Naive thymus-derived CD4-positive, alpha-beta T cell (primary cell): ENCODE measurements at regions of chr19 and their contacts with region 1.

Region 1: GRCh38 chr19:42132851-42133528 is 744 bp upstream of the POU2F2 start:
- DNase-seq: peak; percentile 69 to 97 (median 85)
- ATAC-seq: peak; percentile 87
- H3K4me3 ChIP-seq: peak overlapping the region; percentile 81
- H3K4me3 Mint-ChIP-seq: peak overlapping the region; percentile 81 to 95 (median 92)
- H3K27ac ChIP-seq: peak overlapping the region; percentile 80
- H3K27ac Mint-ChIP-seq: peak overlapping the region; percentile 69 to 94 (median 87)
- H3K4me1 ChIP-seq: peaks cover 23 to 33% of the 10 kb centered on the region in 2 donors
- H3K4me1 Mint-ChIP-seq: peaks cover 54 to 79% (median 65%) of the 10 kb centered on the region in 7 donors
- H3K27me3 ChIP-seq: no peaks in the 10 kb centered on the region
- H3K27me3 Mint-ChIP-seq: no peaks in the 10 kb centered on the region

Region 2: GRCh38 chr19:41934849-41935374 is 198.1 kb before region 1 on chr19:
- CTCF ChIA-PET with region 1: no interaction called
- POLR2A ChIA-PET with region 1: no interaction called
- intact Hi-C with region 1: no loop called
- DNase-seq: peak; percentile 47 to 78 (median 67)
- ATAC-seq: peak; percentile 83
- H3K4me3 ChIP-seq: no peak overlapping the region
- H3K4me3 Mint-ChIP-seq: peak overlapping the region in 4 of 10 donors; percentile 30 to 66 (median 33)
- H3K27ac ChIP-seq: peak overlapping the region; percentile 40
- H3K27ac Mint-ChIP-seq: peak overlapping the region; percentile 46 to 88 (median 81)
- H3K4me1 ChIP-seq: peaks cover 26 to 29% of the 10 kb centered on the region in 2 donors
- H3K4me1 Mint-ChIP-seq: peaks cover 37 to 63% (median 48%) of the 10 kb centered on the region in 7 donors
- H3K27me3 ChIP-seq: peaks cover 0 to 4% of the 10 kb centered on the region in 2 donors
- H3K27me3 Mint-ChIP-seq: peaks cover 0 to 24% (median 0%) of the 10 kb centered on the region in 5 donors

Region 3: GRCh38 chr19:42075616-42076379 is 57.2 kb before region 1 on chr19 and contains the start of gene ZNF574:
- CTCF ChIA-PET with region 1: interaction called, 3 read pairs
- POLR2A ChIA-PET with region 1: interaction called, 3 read pairs
- intact Hi-C with region 1: loop called (anchors 1 to 2 kb)
- DNase-seq: peak; percentile 91 to 99 (median 98)
- ATAC-seq: peak; percentile 98
- H3K4me3 ChIP-seq: peak within 1 kb of the TSS; percentile 70
- H3K4me3 Mint-ChIP-seq: peak within 1 kb of the TSS; percentile 92 to 100 (median 98)
- H3K27ac ChIP-seq: peak within 1 kb of the TSS; percentile 97
- H3K27ac Mint-ChIP-seq: peak within 1 kb of the TSS; percentile 99 to 100 (median 100)
- H3K4me1 ChIP-seq: peaks cover 19 to 24% of the 10 kb centered on the region in 2 donors
- H3K4me1 Mint-ChIP-seq: peaks cover 26 to 44% (median 38%) of the 10 kb centered on the region in 7 donors
- H3K27me3 ChIP-seq: no peaks in the 10 kb centered on the region
- H3K27me3 Mint-ChIP-seq: peaks cover 0 to 13% (median 0%) of the 10 kb centered on the region in 5 donors
- total RNA-seq, gene ZNF574: 17.6 to 26.7 (median 20.9) TPM

Region 4: GRCh38 chr19:42158926-42159325 is 25.9 kb after region 1 on chr19:
- CTCF ChIA-PET with region 1: no interaction called
- POLR2A ChIA-PET with region 1: no interaction called
- intact Hi-C with region 1: no loop called
- DNase-seq: no peak
- ATAC-seq: no peak
- H3K4me3 ChIP-seq: no peak overlapping the region
- H3K4me3 Mint-ChIP-seq: no peak overlapping the region
- H3K27ac ChIP-seq: no peak overlapping the region
- H3K27ac Mint-ChIP-seq: peak overlapping the region in 1 of 9 donors; percentile 77
- H3K4me1 ChIP-seq: peaks cover 3 to 16% of the 10 kb centered on the region in 2 donors
- H3K4me1 Mint-ChIP-seq: peaks cover 13 to 25% (median 21%) of the 10 kb centered on the region in 7 donors
- H3K27me3 ChIP-seq: no peaks in the 10 kb centered on the region
- H3K27me3 Mint-ChIP-seq: peaks cover 0 to 27% (median 0%) of the 10 kb centered on the region in 5 donors

Region 5: GRCh38 chr19:42176990-42177685 is 44.1 kb after region 1 on chr19:
- CTCF ChIA-PET with region 1: interaction called, 6 read pairs
- POLR2A ChIA-PET with region 1: interaction called, 4 read pairs
- intact Hi-C with region 1: loop called (anchors 1 to 2 kb)
- DNase-seq: peak; percentile 52 to 82 (median 67)
- ATAC-seq: peak; percentile 96
- H3K4me3 ChIP-seq: peak overlapping the region; percentile 41
- H3K4me3 Mint-ChIP-seq: peak overlapping the region in 1 of 10 donors; percentile 12
- H3K27ac ChIP-seq: no peak overlapping the region
- H3K27ac Mint-ChIP-seq: no peak overlapping the region
- H3K4me1 ChIP-seq: peaks cover 12 to 21% of the 10 kb centered on the region in 2 donors
- H3K4me1 Mint-ChIP-seq: peaks cover 16 to 24% (median 19%) of the 10 kb centered on the region in 7 donors
- H3K27me3 ChIP-seq: peaks cover 0 to 11% of the 10 kb centered on the region in 2 donors
- H3K27me3 Mint-ChIP-seq: peaks cover 13 to 34% (median 19%) of the 10 kb centered on the region in 5 donors

Region 6: DNA sequence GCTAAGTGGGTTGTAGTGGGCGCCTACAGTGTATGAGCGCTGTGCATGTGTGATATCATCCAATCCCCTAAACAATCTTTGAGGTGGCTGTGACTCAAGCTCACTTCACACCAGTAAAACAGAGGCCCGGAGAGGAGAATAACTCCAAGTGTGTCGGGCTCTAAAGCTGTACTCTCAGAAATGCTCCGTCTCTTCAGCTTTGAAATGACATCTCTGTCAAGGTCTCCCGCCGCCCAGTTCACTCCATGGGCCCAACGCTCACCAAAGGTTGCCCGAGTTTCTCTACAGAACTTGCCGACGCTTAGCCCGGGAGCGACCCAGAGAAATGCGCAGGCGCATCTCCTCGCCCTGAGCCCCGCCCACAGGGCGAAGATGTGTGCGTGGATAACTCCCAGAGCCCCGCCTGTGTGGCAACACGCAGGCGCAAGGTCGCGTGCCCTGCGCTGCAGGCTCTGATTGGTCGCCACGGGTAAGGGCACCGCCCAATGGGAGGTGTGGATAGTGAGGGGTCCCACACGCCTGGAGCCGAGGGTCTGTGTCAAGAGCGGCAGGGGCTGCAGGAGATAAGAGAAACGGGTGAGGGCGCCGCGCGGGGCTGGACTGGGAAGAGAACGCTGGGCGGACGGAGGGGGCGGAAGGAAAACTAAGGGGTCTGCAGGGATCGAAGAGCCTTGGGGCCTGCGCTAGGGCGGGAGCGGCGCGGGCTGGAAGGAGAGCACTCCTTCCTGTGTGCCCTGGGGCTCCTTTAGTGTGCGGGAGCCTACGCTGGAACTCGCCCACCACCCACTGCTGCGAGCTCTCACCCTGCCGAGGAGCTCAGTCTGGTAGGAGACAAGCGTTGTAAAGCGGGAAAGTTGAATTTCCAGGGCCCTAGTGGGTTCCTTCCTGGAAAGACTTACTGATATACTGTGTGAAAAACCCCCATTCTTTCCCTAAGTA is 87.1 kb after region 1 on chr19 and contains the start of gene ZNF526:
- CTCF ChIA-PET with region 1: interaction called, 4 read pairs
- POLR2A ChIA-PET with region 1: no interaction called
- intact Hi-C with region 1: loop called (anchors 1 kb)
- DNase-seq: peak; percentile 92 to 97 (median 96)
- ATAC-seq: peak; percentile 88
- H3K4me3 ChIP-seq: peak within 1 kb of the TSS; percentile 72
- H3K4me3 Mint-ChIP-seq: peak within 1 kb of the TSS; percentile 95 to 99 (median 98)
- H3K27ac ChIP-seq: peak within 1 kb of the TSS; percentile 88
- H3K27ac Mint-ChIP-seq: peak within 1 kb of the TSS; percentile 88 to 98 (median 95)
- H3K4me1 ChIP-seq: peaks cover 37 to 43% of the 10 kb centered on the region in 2 donors
- H3K4me1 Mint-ChIP-seq: peaks cover 46 to 62% (median 55%) of the 10 kb centered on the region in 7 donors
- H3K27me3 ChIP-seq: no peaks in the 10 kb centered on the region
- H3K27me3 Mint-ChIP-seq: peaks cover 0 to 3% (median 0%) of the 10 kb centered on the region in 5 donors
- total RNA-seq, gene ZNF526: 8.6 to 25.2 (median 22.7) TPM

Region 7: DNA sequence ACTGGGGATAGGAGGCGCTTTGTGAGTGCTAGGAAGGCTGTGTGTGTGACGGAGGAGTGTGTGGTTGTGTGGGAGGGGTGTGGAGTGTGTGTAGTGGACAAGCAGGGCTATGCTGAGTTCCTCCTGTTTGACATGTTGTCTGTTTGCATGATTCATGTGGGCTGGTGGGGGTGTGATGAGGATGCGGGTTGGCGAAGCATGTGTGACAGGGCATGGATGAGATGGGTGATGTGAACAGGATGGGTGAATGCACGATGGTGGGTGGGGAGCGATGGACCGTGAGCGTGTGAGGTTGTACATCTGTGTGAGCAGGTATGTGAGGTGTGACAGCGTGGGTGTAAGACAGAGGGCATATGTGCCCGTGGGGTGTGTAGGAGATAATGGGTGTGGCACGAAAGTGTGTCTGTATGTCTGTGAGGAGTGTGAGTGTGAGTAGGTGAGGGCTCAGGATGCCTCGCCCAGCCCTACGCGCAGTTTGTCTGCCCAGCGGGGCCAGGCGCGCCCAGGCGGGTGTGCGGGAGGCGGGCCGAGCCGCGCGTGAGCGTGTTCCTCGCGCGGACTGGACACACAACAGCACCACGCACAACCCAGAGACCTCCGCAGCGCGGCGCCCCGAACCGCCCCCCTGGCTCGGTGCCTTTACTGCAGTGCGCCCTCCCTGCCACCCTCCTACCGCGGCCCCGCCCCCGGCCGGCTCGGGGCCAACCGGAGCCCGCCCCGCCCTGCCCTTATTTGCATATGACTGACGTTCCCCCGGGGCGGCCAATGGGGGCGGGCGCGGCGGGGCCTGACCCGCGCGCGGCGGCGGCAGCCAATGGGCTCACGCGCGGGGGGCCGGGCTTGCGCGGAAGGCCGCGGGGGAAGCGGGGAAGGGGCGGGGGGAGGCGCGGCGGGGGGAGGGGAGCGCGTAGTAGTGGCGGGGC is 150.4 kb after region 1 on chr19:
- CTCF ChIA-PET with region 1: interaction called, 14 read pairs
- POLR2A ChIA-PET with region 1: interaction called, 4 read pairs
- intact Hi-C with region 1: loop called (anchors 1 kb)
- DNase-seq: peak; percentile 93 to 97 (median 95)
- ATAC-seq: peak; percentile 83
- H3K4me3 ChIP-seq: peak overlapping the region; percentile 50
- H3K4me3 Mint-ChIP-seq: peak overlapping the region in 1 of 10 donors; percentile 0
- H3K27ac ChIP-seq: peak overlapping the region; percentile 83
- H3K27ac Mint-ChIP-seq: no peak overlapping the region
- H3K4me1 ChIP-seq: peaks cover 42 to 45% of the 10 kb centered on the region in 2 donors
- H3K4me1 Mint-ChIP-seq: peaks cover 22 to 44% (median 32%) of the 10 kb centered on the region in 7 donors
- H3K27me3 ChIP-seq: no peaks in the 10 kb centered on the region
- H3K27me3 Mint-ChIP-seq: no peaks in the 10 kb centered on the region

Region 8: GRCh38 chr19:42325273-42325895 is 192.4 kb after region 1 on chr19 and contains the start of gene MEGF8:
- CTCF ChIA-PET with region 1: interaction called, 3 read pairs
- POLR2A ChIA-PET with region 1: no interaction called
- intact Hi-C with region 1: loop called (anchors 1 kb)
- DNase-seq: peak; percentile 86 to 99 (median 97)
- ATAC-seq: peak; percentile 96
- H3K4me3 ChIP-seq: peak within 1 kb of the TSS; percentile 95
- H3K4me3 Mint-ChIP-seq: peak within 1 kb of the TSS; percentile 89 to 96 (median 94)
- H3K27ac ChIP-seq: peak within 1 kb of the TSS; percentile 84
- H3K27ac Mint-ChIP-seq: peak within 1 kb of the TSS; percentile 51 to 93 (median 83)
- H3K4me1 ChIP-seq: peaks cover 6 to 7% of the 10 kb centered on the region in 2 donors
- H3K4me1 Mint-ChIP-seq: peaks cover 13 to 29% (median 22%) of the 10 kb centered on the region in 7 donors
- H3K27me3 ChIP-seq: peaks cover 0 to 4% of the 10 kb centered on the region in 2 donors
- H3K27me3 Mint-ChIP-seq: peaks cover 6 to 33% (median 16%) of the 10 kb centered on the region in 5 donors
- total RNA-seq, gene MEGF8: 6.7 to 9.3 (median 8.6) TPM

Region 9: GRCh38 chr19:42433503-42434260 is 300.7 kb after region 1 on chr19:
- CTCF ChIA-PET with region 1: no interaction called
- POLR2A ChIA-PET with region 1: no interaction called
- intact Hi-C with region 1: loop called in 1 of 2 experiments (anchors 2 kb)
- DNase-seq: peak in 7 of 9 donors; percentile 41 to 62 (median 56)
- ATAC-seq: peak; percentile 64
- H3K4me3 ChIP-seq: no peak overlapping the region
- H3K4me3 Mint-ChIP-seq: no peak overlapping the region
- H3K27ac ChIP-seq: no peak overlapping the region
- H3K27ac Mint-ChIP-seq: peak overlapping the region in 1 of 9 donors; percentile 5
- H3K4me1 ChIP-seq: no peaks in the 10 kb centered on the region
- H3K4me1 Mint-ChIP-seq: peaks cover 4 to 10% (median 6%) of the 10 kb centered on the region in 7 donors
- H3K27me3 ChIP-seq: no peaks in the 10 kb centered on the region
- H3K27me3 Mint-ChIP-seq: peaks cover 0 to 4% (median 0%) of the 10 kb centered on the region in 5 donors